Aorta (tissue), 5 donors: ENCODE measurements at regions of chr11 and their contacts with region 1.

Region 1: GRCh38 chr11:133834682-133835592 is 10.4 kb downstream of the SPATA19 start:
- DNase-seq: no peak
- ATAC-seq: peak; percentile 61
- H3K4me3 ChIP-seq: no peak overlapping the region
- H3K27ac ChIP-seq: no peak overlapping the region
- H3K4me1 ChIP-seq: no peaks in the 10 kb centered on the region
- H3K27me3 ChIP-seq: no peaks in the 10 kb centered on the region

Region 2: DNA sequence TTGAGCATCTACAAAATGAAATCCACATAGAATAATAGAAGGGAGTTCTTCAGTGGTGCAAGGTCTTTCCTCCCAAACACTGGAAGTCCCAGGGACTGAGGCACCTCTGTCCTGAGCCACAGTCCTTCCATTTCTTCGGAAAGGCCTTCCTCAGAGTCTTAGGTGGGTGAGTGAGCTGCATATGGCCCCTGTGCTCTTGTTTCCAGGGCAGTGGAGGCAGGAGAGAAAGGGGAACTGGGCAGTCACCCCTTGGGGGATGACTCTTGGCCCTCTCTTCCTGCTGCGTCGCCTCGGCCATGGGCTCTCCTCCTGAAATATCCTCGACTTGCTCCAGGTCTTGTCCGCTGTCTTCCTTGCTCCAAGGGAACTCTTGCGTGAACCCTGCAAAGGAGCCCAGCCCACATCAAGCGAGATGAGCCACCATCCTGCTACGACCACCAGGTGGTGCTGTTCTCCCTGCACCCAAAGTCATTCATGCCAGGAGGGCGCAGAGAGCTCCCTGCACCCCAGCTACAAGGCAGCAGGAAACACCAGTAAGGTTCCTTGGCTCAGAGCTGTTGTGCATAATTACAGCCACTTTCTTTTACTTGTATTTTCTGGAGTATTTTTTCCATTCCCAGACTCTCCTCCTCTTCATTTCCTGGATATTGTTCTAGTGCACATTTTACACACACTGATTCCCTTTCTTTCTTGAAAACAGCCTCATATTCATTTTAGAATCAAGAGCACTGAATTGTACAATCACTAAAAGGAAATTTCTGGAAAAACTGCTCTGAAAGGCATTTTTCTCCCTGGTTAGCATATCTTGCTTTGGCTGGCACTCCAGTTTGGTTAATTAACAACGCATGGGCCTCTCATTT is 700.4 kb before region 1 on chr11:
- intact Hi-C with region 1: loop called in 1 of 2 experiments (anchors 5 kb)
- DNase-seq: peak in 1 of 2 donors; percentile 57
- ATAC-seq: peak; percentile 62
- H3K4me3 ChIP-seq: no peak overlapping the region
- H3K27ac ChIP-seq: no peak overlapping the region
- H3K4me1 ChIP-seq: no peaks in the 10 kb centered on the region
- H3K27me3 ChIP-seq: no peaks in the 10 kb centered on the region

Region 3: DNA sequence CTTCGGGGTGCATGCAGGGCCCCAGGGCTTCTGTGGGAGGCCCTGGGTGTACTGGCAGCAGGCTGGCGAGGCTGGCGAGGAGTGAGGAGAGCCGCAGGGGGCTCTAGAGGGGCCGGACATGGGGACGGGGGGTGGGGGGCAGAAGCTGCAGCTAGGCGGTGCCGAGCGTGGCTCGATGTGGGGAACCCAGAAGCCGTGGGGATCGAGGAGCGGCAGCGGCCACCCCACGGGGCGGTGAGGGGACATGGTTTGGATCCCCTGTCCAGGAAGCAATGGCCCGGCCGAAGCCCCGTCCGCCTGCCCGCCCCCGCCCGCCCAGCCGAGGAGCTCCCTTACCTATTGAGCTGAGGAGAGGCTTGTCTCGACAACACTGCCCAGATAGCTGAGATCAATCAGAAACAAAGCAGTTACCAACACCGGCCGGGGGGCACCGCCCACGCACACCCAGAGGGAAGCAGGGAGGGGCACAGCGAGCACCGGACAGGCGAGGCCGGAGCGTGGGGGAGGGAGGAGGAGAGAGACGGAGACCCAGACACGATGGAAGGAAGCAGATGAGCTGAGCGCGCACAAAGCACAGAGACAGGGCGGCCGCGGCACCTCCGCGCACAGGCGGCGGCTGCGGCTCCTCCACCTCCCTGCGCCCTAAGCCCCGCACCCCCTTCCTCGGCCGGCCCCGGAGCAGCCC is 83.1 kb after region 1 on chr11:
- intact Hi-C with region 1: no loop called
- DNase-seq: no peak
- ATAC-seq: no peak
- H3K4me3 ChIP-seq: no peak overlapping the region
- H3K27ac ChIP-seq: no peak overlapping the region
- H3K4me1 ChIP-seq: no peaks in the 10 kb centered on the region
- H3K27me3 ChIP-seq: no peaks in the 10 kb centered on the region